ENCODE measurements at regions of chr14 and their contacts with region 1.

Region 1: DNA sequence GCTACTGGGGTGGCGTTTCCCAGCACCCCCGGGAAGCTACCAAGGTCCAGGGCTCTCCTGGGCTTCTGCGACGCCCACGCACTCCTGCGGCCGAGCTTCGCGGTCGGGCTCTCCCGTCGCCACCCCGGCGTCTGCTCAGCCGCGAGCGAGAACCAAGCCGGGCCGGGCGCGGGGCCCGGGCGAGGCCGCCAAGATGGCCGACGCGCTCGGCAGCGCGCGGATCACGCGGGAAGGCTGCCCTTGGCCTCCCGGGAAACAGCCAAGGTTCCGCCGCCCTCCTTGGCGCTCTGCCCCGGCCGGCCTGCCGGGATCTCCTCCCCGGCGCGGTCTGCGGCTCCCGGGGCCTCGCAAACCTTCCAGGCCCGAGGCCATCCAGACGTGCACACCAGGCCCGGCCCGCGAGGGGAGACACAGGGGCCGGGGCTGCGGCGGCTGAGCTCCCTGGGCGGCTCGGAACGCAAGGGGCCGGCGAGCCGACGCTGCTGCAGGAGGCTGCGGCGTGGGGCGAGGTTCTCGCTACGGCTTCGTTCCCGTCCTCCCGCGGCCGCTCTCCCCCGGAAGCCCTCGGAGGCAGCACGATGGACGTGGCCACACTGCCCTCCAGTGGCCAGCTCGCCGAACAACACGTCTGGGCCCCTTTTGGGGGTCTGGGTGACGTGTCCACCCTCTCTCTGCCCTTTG is 23.5 kb upstream of the ZFP36L1 start:
- DNase-seq: peak; percentile 93
- H3K4me3 Mint-ChIP-seq: peak overlapping the region; percentile 77
- H3K27ac Mint-ChIP-seq: peak overlapping the region; percentile 93
- H3K4me1 Mint-ChIP-seq: peaks cover 70% of the 10 kb centered on the region
- H3K27me3 Mint-ChIP-seq: no peaks in the 10 kb centered on the region

Region 2: GRCh38 chr14:67943947-67944346 is 872.5 kb before region 1 on chr14:
- CTCF ChIA-PET with region 1: interaction called, 31 read pairs
- POLR2A ChIA-PET with region 1: no interaction called
- intact Hi-C with region 1: no loop called
- DNase-seq: peak; percentile 14
- H3K4me3 Mint-ChIP-seq: no peak overlapping the region
- H3K27ac Mint-ChIP-seq: no peak overlapping the region
- H3K4me1 Mint-ChIP-seq: no peaks in the 10 kb centered on the region
- H3K27me3 Mint-ChIP-seq: no peaks in the 10 kb centered on the region

Region 3: GRCh38 chr14:68408680-68409079 is 407.7 kb before region 1 on chr14:
- CTCF ChIA-PET with region 1: interaction called, 7 read pairs
- POLR2A ChIA-PET with region 1: no interaction called
- intact Hi-C with region 1: loop called (anchors 10 kb)
- DNase-seq: no peak
- H3K4me3 Mint-ChIP-seq: no peak overlapping the region
- H3K27ac Mint-ChIP-seq: no peak overlapping the region
- H3K4me1 Mint-ChIP-seq: peaks cover 23% of the 10 kb centered on the region
- H3K27me3 Mint-ChIP-seq: no peaks in the 10 kb centered on the region

Region 4: DNA sequence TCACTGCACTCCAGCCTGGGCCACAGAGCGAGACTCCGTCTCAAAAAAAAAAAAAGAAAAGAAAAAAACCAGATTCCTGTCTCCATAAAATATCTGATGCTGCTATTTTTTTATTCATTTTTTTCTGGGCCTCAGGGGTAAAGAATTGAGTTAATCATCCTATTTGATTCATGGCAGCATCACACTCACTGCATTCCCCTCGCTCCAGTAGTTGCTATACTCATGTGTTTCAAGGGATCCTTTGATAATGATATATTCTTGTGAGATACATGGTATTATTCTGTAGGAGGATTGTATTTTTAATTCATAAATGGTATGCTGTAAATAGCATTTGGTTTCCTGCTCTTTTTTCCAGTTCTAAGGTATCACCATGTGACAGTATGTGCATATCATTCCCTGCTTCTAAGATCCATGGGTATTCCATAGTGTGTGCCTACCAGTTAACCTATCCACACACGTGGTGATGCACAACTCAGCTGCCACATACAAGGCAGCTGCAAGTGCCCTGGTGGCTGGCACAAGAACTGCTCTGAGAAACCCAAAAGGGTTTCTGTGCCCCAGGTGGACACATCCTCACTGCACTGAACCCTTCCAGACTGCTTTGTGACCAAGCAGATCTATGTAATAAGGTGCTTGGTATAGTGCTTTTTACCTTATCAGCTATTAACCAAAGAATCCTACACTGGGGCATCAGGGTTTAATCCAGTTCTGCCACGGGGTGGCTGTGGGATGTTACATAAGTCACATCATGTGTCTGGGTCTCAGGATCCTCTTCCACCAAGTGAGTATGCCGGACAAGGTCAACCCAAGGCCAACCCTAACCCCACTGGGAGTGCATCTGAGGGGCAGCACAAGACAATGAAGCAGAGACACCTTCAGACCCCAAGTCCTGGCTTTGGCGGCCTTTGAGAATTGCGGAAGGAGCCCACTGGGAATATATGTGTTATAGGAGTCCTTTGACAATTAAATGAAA is 98.1 kb before region 1 on chr14:
- CTCF ChIA-PET with region 1: interaction called, 9 read pairs
- POLR2A ChIA-PET with region 1: interaction called, 3 read pairs
- intact Hi-C with region 1: loop called (anchors 2 kb)
- DNase-seq: peak; percentile 46
- H3K4me3 Mint-ChIP-seq: no peak overlapping the region
- H3K27ac Mint-ChIP-seq: no peak overlapping the region
- H3K4me1 Mint-ChIP-seq: peaks cover 40% of the 10 kb centered on the region
- H3K27me3 Mint-ChIP-seq: no peaks in the 10 kb centered on the region

Region 5: GRCh38 chr14:68795597-68796417 is 20.6 kb before region 1 on chr14:
- CTCF ChIA-PET with region 1: interaction called, 218 read pairs
- POLR2A ChIA-PET with region 1: interaction called, 163 read pairs
- intact Hi-C with region 1: loop called (anchors 1 kb)
- DNase-seq: peak; percentile 87
- H3K4me3 Mint-ChIP-seq: peak overlapping the region; percentile 89
- H3K27ac Mint-ChIP-seq: peak overlapping the region; percentile 99
- H3K4me1 Mint-ChIP-seq: peaks cover 48% of the 10 kb centered on the region
- H3K27me3 Mint-ChIP-seq: no peaks in the 10 kb centered on the region

Region 6: GRCh38 chr14:68862954-68863594 is 46.7 kb after region 1 on chr14:
- CTCF ChIA-PET with region 1: no interaction called
- POLR2A ChIA-PET with region 1: no interaction called
- intact Hi-C with region 1: no loop called
- DNase-seq: peak; percentile 82
- H3K4me3 Mint-ChIP-seq: no peak overlapping the region
- H3K27ac Mint-ChIP-seq: no peak overlapping the region
- H3K4me1 Mint-ChIP-seq: no peaks in the 10 kb centered on the region
- H3K27me3 Mint-ChIP-seq: no peaks in the 10 kb centered on the region